H1 (cell line): ENCODE measurements at regions of chr10 and their contacts with region 1.

Region 1: DNA sequence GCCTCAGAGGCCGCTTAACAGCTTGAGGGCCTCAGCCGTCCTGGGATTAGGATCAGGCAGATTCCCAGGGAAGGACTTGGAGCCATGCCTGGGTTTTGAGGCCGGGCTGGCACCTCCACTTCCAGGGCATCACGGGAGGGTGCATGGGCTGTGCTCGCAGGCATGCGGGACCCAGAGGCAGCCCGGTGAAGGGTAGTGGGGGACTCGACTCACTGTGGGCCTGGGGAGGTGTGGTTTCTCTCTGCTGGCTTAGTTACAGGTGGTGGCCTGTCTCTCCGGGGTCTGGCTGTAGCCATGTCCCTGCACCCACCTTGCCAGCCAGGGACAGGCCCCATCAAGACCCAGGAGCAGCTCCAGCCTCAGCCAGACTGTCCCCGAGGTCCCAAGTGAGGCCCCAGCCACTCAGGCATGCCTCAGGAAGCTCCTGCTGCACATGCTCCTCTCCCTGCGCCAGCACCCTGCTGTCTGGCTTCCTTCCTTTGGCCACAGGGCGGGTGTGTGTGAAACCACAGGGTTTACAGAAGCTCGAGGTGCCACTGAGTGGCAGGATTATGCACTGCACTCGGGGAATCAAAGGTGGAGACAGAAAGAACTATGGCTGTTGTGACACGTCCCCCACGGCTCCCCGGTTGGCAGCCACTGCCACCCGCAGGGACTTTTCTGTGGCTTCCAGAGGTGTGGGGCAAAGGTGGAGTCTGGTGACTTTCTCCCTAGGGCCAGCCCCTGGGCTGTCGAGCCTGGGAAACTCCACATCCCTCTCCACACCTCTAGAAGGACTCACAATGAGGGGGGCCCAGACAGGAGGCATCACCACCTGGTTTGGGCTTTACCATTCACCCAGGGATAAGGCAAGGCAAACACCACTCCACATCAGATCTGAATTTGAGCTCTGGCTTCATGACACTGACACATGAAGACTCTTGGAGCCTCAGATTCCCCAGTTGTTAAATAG is 19.7 kb downstream of the GOLGA7B start:
- DNase-seq: peak in 1 of 2 experiments; percentile 71
- H3K4me3 ChIP-seq: no peak overlapping the region
- H3K27ac ChIP-seq: no peak overlapping the region; the same call in 1 of the 2 replicates
- H3K4me1 ChIP-seq: peaks cover 4 to 22% (median 9%) of the 10 kb centered on the region in 4 experiments
- H3K27me3 ChIP-seq: no peaks in the 10 kb centered on the region
- CTCF ChIP-seq: peak; percentile 61 to 94 (median 79)
- EP300 ChIP-seq: no peak
- POLR2A ChIP-seq: no peak
- RAD21 ChIP-seq: peak; percentile 84 to 88

Region 2: GRCh38 chr10:97714048-97714371 is 155.4 kb before region 1 on chr10:
- CTCF ChIA-PET with region 1: interaction called, 11 read pairs
- POLR2A ChIA-PET with region 1: no interaction called
- DNase-seq: peak in 1 of 2 experiments; percentile 76
- H3K4me3 ChIP-seq: peak overlapping the region; percentile 47 to 78 (median 66)
- H3K27ac ChIP-seq: peak overlapping the region; percentile 77
- H3K4me1 ChIP-seq: peaks cover 5 to 18% (median 11%) of the 10 kb centered on the region in 4 experiments
- H3K27me3 ChIP-seq: no peaks in the 10 kb centered on the region
- CTCF ChIP-seq: peak in 2 of 3 experiments; percentile 22 to 41; a peak in 2 of 4 replicates
- EP300 ChIP-seq: no peak
- POLR2A ChIP-seq: peak; percentile 39 to 84
- RAD21 ChIP-seq: no peak

Region 3: DNA sequence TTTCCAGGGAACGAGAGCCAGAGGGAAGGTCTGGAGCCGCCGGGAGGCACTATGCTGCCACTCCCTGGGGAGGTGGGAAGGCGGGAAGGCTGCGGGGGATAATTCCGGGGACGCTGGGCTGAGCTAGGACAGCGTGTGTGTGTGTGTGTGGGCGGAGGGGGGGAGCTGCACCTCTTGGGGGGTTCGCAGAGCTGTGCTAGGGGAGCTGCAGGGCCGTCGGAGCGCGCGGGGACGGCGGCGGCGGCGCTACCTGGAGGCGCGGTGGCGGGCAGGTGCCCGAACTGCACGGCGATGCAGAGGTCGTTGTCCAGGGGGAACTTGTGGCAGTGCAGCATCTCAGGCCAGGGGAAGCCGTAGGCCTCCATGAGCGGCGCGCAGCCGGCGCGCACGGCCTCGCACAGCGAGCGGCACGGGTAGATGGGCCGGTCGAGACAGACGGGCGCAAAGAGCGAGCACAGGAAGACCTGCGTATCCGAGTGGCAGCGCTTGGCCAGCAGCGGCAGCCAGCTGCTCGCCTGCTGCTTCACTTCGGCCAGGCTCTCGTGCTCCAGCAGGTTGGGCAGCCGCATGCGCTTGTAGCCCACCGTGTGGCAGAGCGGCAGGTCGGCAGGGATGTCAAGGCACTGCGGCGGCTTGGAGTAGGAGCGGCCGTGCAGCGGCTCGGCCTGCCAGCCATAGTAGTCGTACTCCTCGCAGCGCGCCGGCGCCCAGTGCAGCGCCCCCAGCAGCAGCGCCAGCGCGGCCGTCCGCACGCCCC is 98.1 kb before region 1 on chr10:
- CTCF ChIA-PET with region 1: interaction called, 10 read pairs
- POLR2A ChIA-PET with region 1: no interaction called
- DNase-seq: peak in 1 of 2 experiments; percentile 74
- H3K4me3 ChIP-seq: peak overlapping the region; percentile 54 to 60 (median 55)
- H3K27ac ChIP-seq: no peak overlapping the region
- H3K4me1 ChIP-seq: peaks cover 2 to 10% (median 7%) of the 10 kb centered on the region in 4 experiments; a peak in 6 of 7 replicates
- H3K27me3 ChIP-seq: peaks cover 14 to 51% (median 40%) of the 10 kb centered on the region in 4 experiments
- CTCF ChIP-seq: peak in 2 of 3 experiments; percentile 30 to 33; a peak in 2 of 4 replicates
- EP300 ChIP-seq: no peak
- POLR2A ChIP-seq: no peak
- RAD21 ChIP-seq: 0 out of 4 replicates have a peak, but pooled peaks of 1 of the 2 experiments have one; percentile 14

Region 4: GRCh38 chr10:97827778-97828291 is 41.5 kb before region 1 on chr10:
- CTCF ChIA-PET with region 1: interaction called, 26 read pairs
- POLR2A ChIA-PET with region 1: no interaction called
- DNase-seq: no peak
- H3K4me3 ChIP-seq: no peak overlapping the region
- H3K27ac ChIP-seq: no peak overlapping the region
- H3K4me1 ChIP-seq: peaks cover 0 to 4% (median 0%) of the 10 kb centered on the region in 4 experiments; a peak in 2 of 7 replicates
- H3K27me3 ChIP-seq: no peaks in the 10 kb centered on the region
- CTCF ChIP-seq: no peak
- EP300 ChIP-seq: no peak
- POLR2A ChIP-seq: no peak
- RAD21 ChIP-seq: no peak

Region 5: DNA sequence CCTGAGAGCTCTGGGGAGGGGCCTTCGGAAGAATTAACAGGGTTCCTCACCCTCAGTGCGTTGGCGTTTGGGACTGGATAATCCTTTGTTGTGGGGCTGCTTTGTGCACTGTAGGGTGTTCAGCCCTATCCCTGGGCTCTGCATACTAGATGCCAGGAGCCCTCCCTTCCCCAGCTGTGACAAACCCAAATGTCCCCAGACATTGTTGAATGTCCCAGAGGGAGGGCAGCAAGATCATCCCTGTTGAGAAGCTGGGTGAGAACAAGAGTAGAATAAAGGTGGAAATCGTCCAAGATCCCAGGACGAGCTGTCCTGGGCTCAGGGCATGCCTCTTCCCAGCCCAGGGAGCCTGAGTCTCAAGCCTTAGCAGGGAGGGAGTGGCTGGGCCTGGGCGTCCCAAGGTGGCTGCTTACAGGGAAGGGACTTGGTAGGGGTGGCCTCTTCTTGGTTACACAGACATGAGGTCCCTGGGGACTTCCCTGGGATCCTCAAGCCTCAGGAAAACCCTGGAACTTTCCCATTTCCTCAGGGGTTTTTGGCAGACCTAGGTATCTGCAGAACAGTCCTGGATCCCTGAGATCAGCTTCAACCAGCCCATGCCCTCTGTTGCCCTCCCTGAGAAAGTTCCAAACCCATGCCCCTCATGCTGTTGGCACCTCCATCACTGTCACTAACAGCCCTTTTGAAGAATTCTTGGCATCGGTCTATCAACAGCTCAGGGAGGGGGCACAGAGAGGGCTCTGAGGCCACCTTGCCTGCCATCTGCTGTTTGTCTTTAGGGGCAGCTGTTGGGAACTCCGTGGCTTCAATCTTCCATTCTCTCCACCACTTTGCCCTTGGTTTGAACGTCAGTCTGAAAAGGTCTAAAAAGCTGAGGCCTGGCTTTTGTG is 34.0 kb after region 1 on chr10:
- CTCF ChIA-PET with region 1: interaction called, 10 read pairs
- POLR2A ChIA-PET with region 1: interaction called, 3 read pairs
- DNase-seq: no peak
- H3K4me3 ChIP-seq: no peak overlapping the region
- H3K27ac ChIP-seq: no peak overlapping the region
- H3K4me1 ChIP-seq: peaks cover 0 to 4% (median 1%) of the 10 kb centered on the region in 4 experiments; a peak in 3 of 7 replicates
- H3K27me3 ChIP-seq: no peaks in the 10 kb centered on the region; a peak in 2 of 7 replicates
- CTCF ChIP-seq: peak in 1 of 3 experiments; percentile 12; a peak in 1 of 4 replicates
- EP300 ChIP-seq: no peak
- POLR2A ChIP-seq: no peak
- RAD21 ChIP-seq: peak in 1 of 2 experiments; percentile 43; a peak in 2 of 4 replicates